Activated T-helper 1 cell treated with anti-CD3 and anti-CD28 coated beads, Interleukin-12 subunit alpha, Interleukin-12 subunit beta, Interleukin-2, Interleukin-4 antibody, amounts not matched to agents 30 ng/mL and 10 ng/mL and 1 ng/mL, durations not matched to agents 14 hours and 24 hours and 36 hours (primary cell): ENCODE measurements at regions of chr16 and their contacts with region 1.

Region 1: DNA sequence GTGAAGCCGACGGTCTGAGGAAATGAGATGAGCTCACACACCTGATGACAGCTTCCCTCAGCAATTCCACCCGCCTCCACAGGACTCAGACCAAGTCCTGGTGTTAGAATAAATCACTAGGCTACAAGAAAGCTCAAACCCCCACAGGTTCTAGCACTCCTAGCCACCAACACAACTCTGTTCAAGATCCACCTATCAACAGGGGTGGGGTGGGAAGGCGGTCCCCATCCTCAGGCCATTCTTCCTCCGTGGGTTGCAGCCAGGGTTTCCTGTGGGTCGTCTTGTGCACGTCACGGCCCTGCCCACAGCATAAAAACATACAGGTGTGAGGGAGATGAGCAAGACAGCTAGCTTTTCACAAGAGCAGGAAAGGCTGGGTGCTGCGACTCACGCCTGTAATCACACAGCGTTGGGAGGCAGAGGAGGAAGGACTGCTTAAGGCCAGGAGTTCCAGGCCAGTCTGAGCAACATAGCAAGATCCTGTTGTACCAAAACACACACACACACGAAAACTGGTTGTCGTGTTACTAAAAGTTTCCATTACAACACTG is 81.1 kb downstream of the ANKRD11 start:
- DNase-seq: peak; percentile 60
- H3K4me3 Mint-ChIP-seq: peak overlapping the region; percentile 58
- H3K27ac Mint-ChIP-seq: peak overlapping the region; percentile 94
- H3K4me1 Mint-ChIP-seq: peaks cover 72% of the 10 kb centered on the region
- H3K27me3 Mint-ChIP-seq: no peaks in the 10 kb centered on the region

Region 2: DNA sequence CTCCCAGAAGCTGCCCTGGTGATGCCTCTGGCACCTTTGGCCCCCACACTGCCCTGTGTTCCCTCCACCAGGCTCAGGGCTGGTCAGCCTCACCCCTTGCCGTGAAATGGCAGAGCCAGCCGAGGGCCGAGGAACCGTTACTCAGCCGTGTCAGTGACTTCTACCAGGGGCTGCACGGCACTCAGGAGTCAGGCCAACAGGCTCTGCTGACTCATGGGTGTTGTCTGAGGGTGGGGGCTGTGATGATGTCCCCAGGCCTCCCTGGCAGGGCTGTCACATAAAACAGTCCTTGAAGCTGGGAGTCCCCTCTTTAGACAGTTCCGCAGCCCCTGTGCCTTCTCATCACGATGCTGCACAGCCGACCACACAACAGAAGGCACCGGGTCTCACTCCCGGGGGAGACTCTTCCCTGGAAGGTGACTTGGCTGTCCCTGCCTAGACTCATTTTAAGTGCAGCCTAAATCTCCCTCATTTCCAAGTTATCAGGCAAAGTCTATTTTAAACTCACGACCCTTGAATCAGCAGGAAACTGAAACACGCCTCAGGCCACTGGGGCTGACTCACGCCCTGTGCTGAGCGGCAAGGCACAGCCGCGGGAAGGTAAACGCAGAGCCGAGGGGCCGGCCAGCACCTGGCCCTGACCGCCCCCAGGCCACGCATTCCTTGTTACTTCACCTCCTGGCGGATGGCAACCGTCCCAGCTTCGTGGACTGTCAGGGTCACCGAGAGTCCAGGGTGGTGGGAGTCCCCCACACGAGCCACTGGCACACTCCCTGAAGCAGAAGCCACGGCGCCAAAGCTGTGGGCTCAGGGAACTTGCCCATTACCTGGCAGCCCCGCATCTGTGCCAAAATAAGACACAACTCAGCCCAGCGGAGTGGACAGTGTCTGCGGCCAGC is 89.1 kb before region 1 on chr16:
- intact Hi-C with region 1: loop called (anchors 5 kb)
- DNase-seq: no peak
- H3K4me3 Mint-ChIP-seq: peak overlapping the region; percentile 65
- H3K27ac Mint-ChIP-seq: peak overlapping the region; percentile 81
- H3K4me1 Mint-ChIP-seq: peaks cover 88% of the 10 kb centered on the region
- H3K27me3 Mint-ChIP-seq: no peaks in the 10 kb centered on the region

Region 3: GRCh38 chr16:89388536-89388935 is 20.7 kb before region 1 on chr16:
- intact Hi-C with region 1: loop called (anchors 2 kb)
- DNase-seq: no peak
- H3K4me3 Mint-ChIP-seq: no peak overlapping the region
- H3K27ac Mint-ChIP-seq: no peak overlapping the region
- H3K4me1 Mint-ChIP-seq: peaks cover 57% of the 10 kb centered on the region
- H3K27me3 Mint-ChIP-seq: no peaks in the 10 kb centered on the region

Region 4: DNA sequence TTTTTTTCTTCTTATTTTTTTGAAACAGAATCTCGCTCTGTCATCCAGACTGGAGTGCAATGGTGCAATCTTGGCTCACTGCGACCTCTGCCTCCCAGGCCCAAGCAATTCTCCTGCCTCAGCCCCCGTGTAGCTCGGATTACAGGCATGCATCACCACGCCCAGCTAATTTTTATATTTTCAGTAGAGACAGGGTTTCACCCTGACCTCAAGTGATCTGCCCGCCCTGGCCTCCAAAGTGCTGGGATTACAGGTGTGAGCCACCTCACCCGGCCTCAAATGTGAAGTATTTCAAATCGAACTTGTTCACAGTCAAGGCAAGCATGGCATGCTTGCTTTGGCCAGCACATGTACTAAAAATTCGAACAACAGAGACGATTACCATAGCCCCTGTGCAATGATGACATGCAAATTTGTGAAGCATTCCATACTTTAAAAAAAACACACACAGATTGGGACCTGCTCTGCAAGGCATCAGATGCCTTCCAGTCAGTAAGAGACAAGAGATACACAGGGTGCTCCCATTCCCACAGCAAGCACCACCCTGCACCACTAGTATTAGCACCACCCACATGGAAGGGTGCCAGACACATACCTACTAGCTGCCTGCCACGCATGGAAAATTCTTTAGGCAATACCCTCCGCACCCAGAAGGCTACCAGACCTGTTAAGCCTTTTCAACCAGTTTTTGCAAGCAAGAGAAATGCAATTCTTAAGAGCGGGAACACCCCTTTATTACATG is 33.9 kb after region 1 on chr16:
- intact Hi-C with region 1: loop called (anchors 1 kb)
- DNase-seq: no peak
- H3K4me3 Mint-ChIP-seq: peak overlapping the region; percentile 34
- H3K27ac Mint-ChIP-seq: peak overlapping the region; percentile 50
- H3K4me1 Mint-ChIP-seq: peaks cover 93% of the 10 kb centered on the region
- H3K27me3 Mint-ChIP-seq: no peaks in the 10 kb centered on the region

Region 5: GRCh38 chr16:89490387-89491237 is 81.4 kb after region 1 on chr16 and contains the start of gene ANKRD11:
- intact Hi-C with region 1: loop called (anchors 1 kb)
- DNase-seq: peak; percentile 99
- H3K4me3 Mint-ChIP-seq: peak within 1 kb of the TSS; percentile 96
- H3K27ac Mint-ChIP-seq: peak within 1 kb of the TSS; percentile 99
- H3K4me1 Mint-ChIP-seq: peaks cover 52% of the 10 kb centered on the region
- H3K27me3 Mint-ChIP-seq: no peaks in the 10 kb centered on the region
- total RNA-seq, gene ANKRD11: 176 and 179 TPM in 2 replicates

Region 6: DNA sequence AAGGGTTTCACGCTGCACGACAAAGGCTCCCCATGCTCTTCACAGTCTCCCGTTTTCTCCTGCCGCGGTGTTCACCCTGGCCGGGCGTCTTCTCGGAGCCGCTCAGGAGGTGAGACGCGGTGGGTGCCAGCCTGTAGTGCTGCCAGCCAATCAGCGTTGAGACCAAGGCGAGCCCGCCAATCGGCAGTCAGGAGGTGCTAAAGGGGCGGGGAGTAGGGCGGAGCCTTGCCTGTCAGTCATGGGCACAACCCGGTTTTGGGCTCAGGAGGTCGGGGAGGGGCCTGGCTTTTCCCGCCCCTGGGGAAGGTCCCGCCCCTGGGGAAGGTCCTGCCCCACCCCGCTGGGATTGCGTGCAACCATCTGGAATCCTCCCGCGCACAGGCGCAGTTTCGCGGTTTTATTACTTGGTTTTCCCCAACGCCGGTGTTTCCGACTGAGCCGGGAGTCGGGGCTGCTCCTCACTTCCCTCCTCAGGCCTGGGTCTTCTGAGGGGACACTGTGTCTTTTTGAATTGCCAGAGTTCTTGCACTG is 668.1 kb after region 1 on chr16 and contains the start of gene PRDM7:
- intact Hi-C with region 1: no loop called
- DNase-seq: peak; percentile 95
- H3K4me3 Mint-ChIP-seq: peak within 1 kb of the TSS; percentile 80
- H3K27ac Mint-ChIP-seq: peak within 1 kb of the TSS; percentile 79
- H3K4me1 Mint-ChIP-seq: peaks cover 33% of the 10 kb centered on the region
- H3K27me3 Mint-ChIP-seq: peaks cover 15% of the 10 kb centered on the region
- total RNA-seq, gene PRDM7: not detected in 2 replicates